Caco-2 (cell line): ENCODE measurements at regions of chr3 and their contacts with region 1.

Region 1: GRCh38 chr3:191051037-191051436 is 148.0 kb upstream of the OSTN start:
- DNase-seq: peak in 1 of 2 experiments; percentile 10
- H3K4me3 ChIP-seq: no peak overlapping the region
- H3K4me3 Mint-ChIP-seq: no peak overlapping the region
- H3K27ac Mint-ChIP-seq: no peak overlapping the region
- H3K4me1 ChIP-seq: no peaks in the 10 kb centered on the region
- H3K4me1 Mint-ChIP-seq: no peaks in the 10 kb centered on the region
- H3K27me3 ChIP-seq: no peaks in the 10 kb centered on the region
- H3K27me3 Mint-ChIP-seq: peaks cover 3% of the 10 kb centered on the region
- CTCF ChIP-seq: peak; percentile 13 to 32

Region 2: DNA sequence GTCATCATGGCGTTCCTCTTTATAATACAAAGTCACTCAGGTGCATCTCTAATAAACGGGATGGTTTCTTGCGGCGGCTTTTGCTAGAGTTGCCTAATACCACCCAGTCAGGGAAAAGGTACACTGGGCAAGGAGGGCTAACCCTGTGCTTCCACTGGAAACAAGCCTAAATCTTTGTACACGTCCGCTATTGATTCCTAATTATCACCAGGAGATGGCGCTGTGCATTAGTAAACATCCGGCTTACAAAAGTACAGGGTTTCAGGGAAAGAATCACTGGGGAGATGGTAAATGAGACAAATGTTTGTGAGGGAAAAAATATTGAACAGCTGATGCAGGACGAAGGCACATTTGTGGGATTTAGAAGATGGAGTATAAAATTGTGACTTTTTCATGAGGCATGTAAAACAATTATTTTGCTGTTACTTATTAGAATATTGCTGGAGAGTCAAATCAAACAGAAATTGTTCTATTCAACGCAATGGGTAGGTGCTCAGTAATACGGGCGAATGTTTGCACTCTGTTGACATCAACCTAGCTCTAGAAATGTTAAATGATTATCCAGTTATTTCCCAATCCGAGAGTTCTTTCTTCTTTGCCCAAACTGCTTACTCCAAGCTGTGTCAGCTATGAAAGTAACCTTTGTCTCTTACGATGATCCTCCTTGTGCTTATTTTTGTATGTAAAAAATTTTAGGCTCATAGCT is 239.1 kb before region 1 on chr3:
- CTCF ChIA-PET with region 1: no interaction called
- POLR2A ChIA-PET with region 1: no interaction called
- intact Hi-C with region 1: loop called (anchors 1 kb)
- DNase-seq: peak; percentile 33 to 38
- H3K4me3 ChIP-seq: no peak overlapping the region
- H3K4me3 Mint-ChIP-seq: no peak overlapping the region
- H3K27ac Mint-ChIP-seq: no peak overlapping the region
- H3K4me1 ChIP-seq: no peaks in the 10 kb centered on the region
- H3K4me1 Mint-ChIP-seq: no peaks in the 10 kb centered on the region
- H3K27me3 ChIP-seq: no peaks in the 10 kb centered on the region
- H3K27me3 Mint-ChIP-seq: peaks cover 6% of the 10 kb centered on the region
- CTCF ChIP-seq: peak; percentile 46 to 55

Region 3: DNA sequence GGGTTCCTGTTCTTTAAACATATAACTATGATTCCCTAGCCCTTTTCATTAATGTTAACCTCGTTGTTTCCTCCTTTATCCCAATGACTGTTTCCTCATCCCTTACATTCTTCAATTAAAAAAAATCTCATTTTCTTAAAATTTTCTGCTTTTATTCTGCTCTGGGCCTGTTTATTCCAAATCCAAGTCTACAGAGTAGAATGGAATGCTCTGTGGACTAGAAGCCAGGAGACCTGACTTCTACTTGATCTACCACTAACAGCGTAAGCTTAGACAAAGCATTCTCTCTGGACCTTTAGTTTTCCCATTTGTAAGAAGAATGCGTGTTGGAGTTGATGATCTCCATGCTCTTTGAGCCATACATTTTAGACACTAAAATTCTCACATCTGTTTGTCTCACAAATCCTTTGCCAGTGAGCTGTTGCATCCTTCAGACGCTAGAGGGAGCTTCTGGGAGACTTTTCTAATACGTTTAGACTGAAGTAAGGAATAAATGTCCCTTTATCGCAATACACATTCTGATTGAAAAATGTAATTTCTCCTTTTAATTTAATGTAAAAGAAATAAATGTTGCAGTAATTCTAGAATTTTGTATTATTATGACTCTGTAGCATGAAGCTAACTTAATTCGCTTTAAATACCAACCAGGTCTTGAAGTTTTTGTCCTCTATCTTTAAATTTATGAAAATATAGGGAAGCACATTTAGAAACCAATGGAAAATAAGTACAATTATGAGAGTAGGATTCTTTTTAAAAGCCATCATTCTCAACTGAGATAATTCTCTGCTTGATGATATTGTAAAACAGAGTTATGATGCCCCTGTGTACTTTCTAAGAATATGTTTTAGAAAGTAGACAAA is 166.8 kb before region 1 on chr3:
- CTCF ChIA-PET with region 1: interaction called, 13 read pairs
- POLR2A ChIA-PET with region 1: no interaction called
- intact Hi-C with region 1: loop called (anchors 1 kb)
- DNase-seq: peak; percentile 51 to 57
- H3K4me3 ChIP-seq: no peak overlapping the region
- H3K4me3 Mint-ChIP-seq: no peak overlapping the region
- H3K27ac Mint-ChIP-seq: no peak overlapping the region
- H3K4me1 ChIP-seq: no peaks in the 10 kb centered on the region
- H3K4me1 Mint-ChIP-seq: no peaks in the 10 kb centered on the region
- H3K27me3 ChIP-seq: no peaks in the 10 kb centered on the region
- H3K27me3 Mint-ChIP-seq: peaks cover 12% of the 10 kb centered on the region
- CTCF ChIP-seq: peak; percentile 80 to 88